WTC11 (cell line): ENCODE measurements at regions of chr10 and their contacts with region 1.

Region 1: DNA sequence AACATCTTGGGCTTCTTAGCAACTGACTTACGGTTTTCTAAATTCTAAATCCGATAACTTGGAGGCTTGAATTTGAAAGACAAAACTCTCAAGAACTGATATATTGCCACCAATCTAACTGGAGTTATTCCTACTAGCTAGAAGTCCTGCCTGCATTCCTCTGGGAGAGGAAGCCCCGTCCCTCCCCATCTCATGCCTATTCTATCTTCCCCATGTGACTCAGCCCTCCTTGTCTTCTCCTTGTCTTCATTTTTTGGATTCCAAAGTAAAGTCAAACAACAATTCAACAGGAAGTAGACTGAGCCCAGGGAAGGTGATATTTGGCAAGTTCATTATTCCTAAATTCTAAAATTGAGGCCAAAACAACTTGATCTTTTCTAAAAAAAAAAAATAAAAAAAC is 587.7 kb downstream of the KCNMA1 start:
- DNase-seq: no peak
- ATAC-seq: no peak
- H3K4me3 Mint-ChIP-seq: no peak overlapping the region
- H3K27ac Mint-ChIP-seq: no peak overlapping the region
- H3K4me1 Mint-ChIP-seq: peaks cover 16% of the 10 kb centered on the region
- H3K27me3 Mint-ChIP-seq: no peaks in the 10 kb centered on the region; the same call in 1 of the 2 replicates
- CTCF ChIP-seq: no peak

Region 2: DNA sequence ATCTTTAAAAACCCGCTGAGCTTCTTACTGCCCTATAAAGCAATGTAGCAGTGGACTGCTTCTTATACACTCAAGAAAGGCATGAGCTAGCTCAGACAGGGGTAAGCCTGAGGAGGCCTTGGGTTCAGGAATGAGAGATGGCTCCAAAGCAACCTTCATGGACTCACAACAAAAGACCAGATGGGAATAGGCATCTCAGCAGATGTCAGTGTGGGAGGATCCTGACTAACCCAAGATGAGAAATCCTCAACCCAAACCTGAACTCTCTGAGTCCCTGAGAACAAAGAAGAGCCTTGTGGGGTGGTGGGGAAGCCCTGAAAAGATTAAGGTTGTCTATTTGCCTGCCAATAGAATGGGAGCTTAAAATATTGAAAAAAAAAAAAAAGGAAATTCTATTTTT is 219.7 kb before region 1 on chr10:
- CTCF ChIA-PET with region 1: no interaction called
- POLR2A ChIA-PET with region 1: no interaction called
- DNase-seq: no peak
- ATAC-seq: no peak
- H3K4me3 Mint-ChIP-seq: no peak overlapping the region
- H3K27ac Mint-ChIP-seq: no peak overlapping the region
- H3K4me1 Mint-ChIP-seq: peaks cover 6% of the 10 kb centered on the region
- H3K27me3 Mint-ChIP-seq: no peaks in the 10 kb centered on the region; the same call in 1 of the 2 replicates
- CTCF ChIP-seq: no peak

Region 3: GRCh38 chr10:77036993-77037734 is 12.7 kb before region 1 on chr10:
- CTCF ChIA-PET with region 1: interaction called, 10 read pairs
- POLR2A ChIA-PET with region 1: no interaction called
- DNase-seq: peak; percentile 42
- ATAC-seq: peak; percentile 90
- H3K4me3 Mint-ChIP-seq: no peak overlapping the region
- H3K27ac Mint-ChIP-seq: no peak overlapping the region
- H3K4me1 Mint-ChIP-seq: peaks cover 25% of the 10 kb centered on the region
- H3K27me3 Mint-ChIP-seq: no peaks in the 10 kb centered on the region
- CTCF ChIP-seq: peak; percentile 72

Region 4: DNA sequence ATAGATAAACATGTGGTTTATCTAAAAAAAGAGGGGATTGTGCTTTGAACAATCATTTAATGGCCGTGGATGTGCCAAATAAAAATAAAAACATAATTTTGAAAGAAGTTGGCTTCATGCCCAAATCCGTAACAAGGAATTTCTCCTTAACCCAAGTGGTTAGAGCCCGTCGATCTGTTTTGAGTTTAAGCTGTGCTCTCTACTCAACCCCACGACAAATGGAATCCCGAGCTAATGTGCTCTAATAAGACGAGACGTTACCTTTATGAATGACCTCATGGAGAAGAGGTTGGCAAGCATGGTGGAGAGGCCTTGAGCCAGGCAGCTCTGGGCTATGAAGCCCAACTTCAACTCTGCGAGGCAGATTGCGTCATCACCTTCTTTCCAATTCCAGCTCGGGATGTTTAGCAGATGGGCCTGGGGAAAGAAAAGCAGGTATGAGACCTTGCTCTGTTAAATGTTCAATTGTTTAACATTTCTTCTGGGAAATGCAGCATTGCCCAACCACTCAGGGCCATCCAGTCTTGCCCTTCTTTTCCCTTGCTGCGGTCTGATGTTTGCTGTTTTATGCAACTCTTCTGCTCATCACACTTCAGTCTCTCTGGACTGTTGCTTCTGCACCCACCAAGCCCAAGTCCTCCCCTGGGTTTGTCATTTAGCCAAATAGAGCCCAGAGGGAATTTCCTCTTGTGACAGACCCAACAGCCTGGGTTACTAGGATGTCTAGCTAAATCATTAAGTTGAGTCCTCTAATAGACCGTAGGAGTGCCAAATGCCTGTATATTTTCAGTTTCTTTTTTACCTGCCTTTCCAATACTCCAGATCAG is 23.2 kb after region 1 on chr10:
- CTCF ChIA-PET with region 1: no interaction called
- POLR2A ChIA-PET with region 1: no interaction called
- DNase-seq: no peak
- ATAC-seq: no peak
- H3K4me3 Mint-ChIP-seq: no peak overlapping the region
- H3K27ac Mint-ChIP-seq: no peak overlapping the region
- H3K4me1 Mint-ChIP-seq: peaks cover 10% of the 10 kb centered on the region; the same call in 1 of the 2 replicates
- H3K27me3 Mint-ChIP-seq: no peaks in the 10 kb centered on the region; the same call in 1 of the 2 replicates
- CTCF ChIP-seq: no peak